GM12878 (cell line): ENCODE measurements at regions of chr4 and their contacts with region 1.

Region 1: DNA sequence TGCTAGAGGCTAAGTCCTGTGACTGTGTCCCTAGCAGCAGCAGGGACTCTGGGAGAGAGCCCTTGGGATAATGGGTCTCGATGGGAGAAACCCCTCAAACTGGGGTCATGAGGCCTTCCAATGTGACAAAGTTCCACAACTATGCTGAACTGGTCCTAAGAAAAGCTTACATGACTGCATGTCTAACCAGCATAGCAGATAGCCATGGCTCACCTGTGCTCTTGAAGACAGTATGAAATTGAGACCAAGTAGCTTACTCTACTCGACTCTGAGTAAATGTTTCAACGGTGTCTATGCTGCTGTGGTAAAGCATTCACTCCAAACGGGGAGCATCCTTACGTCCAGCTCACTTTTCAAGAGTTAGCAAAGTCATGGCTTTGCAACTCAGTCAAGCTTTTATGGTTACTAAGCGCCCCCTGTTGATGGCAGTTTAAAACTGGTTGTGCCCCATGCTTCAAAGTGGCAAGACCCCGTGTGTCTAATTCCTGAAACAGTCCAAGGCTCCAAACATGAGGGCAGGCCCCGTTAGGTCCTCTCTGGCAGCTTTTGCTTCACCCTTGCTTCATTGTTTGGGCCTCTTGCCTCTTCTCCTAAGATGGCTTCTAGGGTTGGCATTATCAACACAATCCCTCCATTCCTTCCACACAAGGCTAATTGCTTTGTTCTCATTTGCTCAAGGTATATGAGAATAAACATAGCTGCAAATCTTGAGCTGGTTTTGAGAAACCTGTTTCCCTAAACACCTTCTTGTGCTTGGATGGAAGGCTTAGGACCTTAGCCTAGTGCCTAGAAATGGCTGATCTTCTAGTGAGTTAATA is 46.6 kb downstream of the CCNG2 start:
- DNase-seq: peak; percentile 23
- ATAC-seq: peak; percentile 95
- H3K4me3 ChIP-seq: no peak overlapping the region
- H3K27ac ChIP-seq: no peak overlapping the region
- H3K4me1 ChIP-seq: no peaks in the 10 kb centered on the region
- H3K27me3 ChIP-seq: peaks cover 0 to 3% of the 10 kb centered on the region in 2 experiments; a peak in 1 of 4 replicates
- CTCF ChIP-seq: peak; percentile 68 to 93 (median 84)
- EP300 ChIP-seq: no peak
- POLR2A ChIP-seq: no peak
- RAD21 ChIP-seq: peak; percentile 95

Region 2: GRCh38 chr4:76515975-76516843 is 687.4 kb before region 1 on chr4:
- CTCF ChIA-PET with region 1: no interaction called
- POLR2A ChIA-PET with region 1: no interaction called
- RAD21 ChIA-PET with region 1: no interaction called
- SMC1A ChIA-PET with region 1: interaction called, 4 read pairs
- in situ Hi-C with region 1: loop called (anchors 10 kb)
- intact Hi-C with region 1: loop called (anchors 5 kb)
- DNase-seq: peak; percentile 41
- ATAC-seq: peak; percentile 84
- H3K4me3 ChIP-seq: no peak overlapping the region
- H3K27ac ChIP-seq: no peak overlapping the region
- H3K4me1 ChIP-seq: peaks cover 7% of the 10 kb centered on the region; the same call in 1 of the 2 replicates
- H3K27me3 ChIP-seq: no peaks in the 10 kb centered on the region; a peak in 1 of 4 replicates
- CTCF ChIP-seq: no peak
- EP300 ChIP-seq: peak in 1 of 2 experiments; percentile 53; a peak in 1 of 4 replicates
- POLR2A ChIP-seq: no peak
- RAD21 ChIP-seq: no peak

Region 3: GRCh38 chr4:76601791-76602190 is 601.8 kb before region 1 on chr4:
- CTCF ChIA-PET with region 1: no interaction called
- POLR2A ChIA-PET with region 1: no interaction called
- RAD21 ChIA-PET with region 1: no interaction called
- SMC1A ChIA-PET with region 1: no interaction called
- in situ Hi-C with region 1: no loop called
- intact Hi-C with region 1: no loop called
- DNase-seq: no peak
- ATAC-seq: no peak
- H3K4me3 ChIP-seq: no peak overlapping the region
- H3K27ac ChIP-seq: no peak overlapping the region
- H3K4me1 ChIP-seq: peaks cover 6% of the 10 kb centered on the region; the same call in 1 of the 2 replicates
- H3K27me3 ChIP-seq: no peaks in the 10 kb centered on the region; a peak in 1 of 4 replicates
- CTCF ChIP-seq: no peak
- EP300 ChIP-seq: no peak
- POLR2A ChIP-seq: no peak
- RAD21 ChIP-seq: no peak

Region 4: GRCh38 chr4:77065382-77065781 is 138.2 kb before region 1 on chr4:
- CTCF ChIA-PET with region 1: interaction called, 30 read pairs
- POLR2A ChIA-PET with region 1: interaction called, 8 read pairs
- RAD21 ChIA-PET with region 1: interaction called, 5 read pairs
- SMC1A ChIA-PET with region 1: interaction called, 44 read pairs
- in situ Hi-C with region 1: no loop called
- intact Hi-C with region 1: no loop called
- DNase-seq: no peak
- ATAC-seq: no peak
- H3K4me3 ChIP-seq: no peak overlapping the region
- H3K27ac ChIP-seq: no peak overlapping the region
- H3K4me1 ChIP-seq: no peaks in the 10 kb centered on the region; the same call in 1 of the 2 replicates
- H3K27me3 ChIP-seq: no peaks in the 10 kb centered on the region
- CTCF ChIP-seq: no peak
- EP300 ChIP-seq: no peak
- POLR2A ChIP-seq: no peak
- RAD21 ChIP-seq: no peak

Region 5: DNA sequence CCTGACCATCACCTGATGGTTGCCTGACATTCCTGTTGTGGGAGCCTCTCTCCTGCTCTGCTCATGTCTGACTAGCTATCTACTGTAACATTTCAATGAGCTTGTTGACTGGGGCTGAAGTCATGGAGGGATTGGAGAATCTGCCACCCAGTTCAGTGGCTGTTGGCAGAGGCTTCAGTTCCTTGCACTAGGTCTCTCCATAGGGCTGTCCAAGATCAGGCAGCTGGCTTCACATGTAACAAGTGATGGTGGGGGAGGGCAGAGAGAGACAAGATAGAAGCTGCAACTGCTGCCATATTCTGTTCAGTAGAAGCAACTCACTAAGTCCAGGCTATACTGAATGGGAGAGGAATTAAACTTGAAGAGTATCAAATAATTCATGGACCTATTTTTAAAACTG is 113.7 kb before region 1 on chr4:
- CTCF ChIA-PET with region 1: interaction called, 535 read pairs
- POLR2A ChIA-PET with region 1: interaction called, 3 read pairs
- RAD21 ChIA-PET with region 1: interaction called, 229 read pairs
- SMC1A ChIA-PET with region 1: interaction called, 286 read pairs
- in situ Hi-C with region 1: loop called (anchors 5 kb)
- intact Hi-C with region 1: loop called (anchors 1 kb)
- DNase-seq: no peak
- ATAC-seq: no peak
- H3K4me3 ChIP-seq: no peak overlapping the region
- H3K27ac ChIP-seq: no peak overlapping the region
- H3K4me1 ChIP-seq: no peaks in the 10 kb centered on the region
- H3K27me3 ChIP-seq: no peaks in the 10 kb centered on the region
- CTCF ChIP-seq: no peak
- EP300 ChIP-seq: no peak
- POLR2A ChIP-seq: no peak
- RAD21 ChIP-seq: no peak

Region 6: DNA sequence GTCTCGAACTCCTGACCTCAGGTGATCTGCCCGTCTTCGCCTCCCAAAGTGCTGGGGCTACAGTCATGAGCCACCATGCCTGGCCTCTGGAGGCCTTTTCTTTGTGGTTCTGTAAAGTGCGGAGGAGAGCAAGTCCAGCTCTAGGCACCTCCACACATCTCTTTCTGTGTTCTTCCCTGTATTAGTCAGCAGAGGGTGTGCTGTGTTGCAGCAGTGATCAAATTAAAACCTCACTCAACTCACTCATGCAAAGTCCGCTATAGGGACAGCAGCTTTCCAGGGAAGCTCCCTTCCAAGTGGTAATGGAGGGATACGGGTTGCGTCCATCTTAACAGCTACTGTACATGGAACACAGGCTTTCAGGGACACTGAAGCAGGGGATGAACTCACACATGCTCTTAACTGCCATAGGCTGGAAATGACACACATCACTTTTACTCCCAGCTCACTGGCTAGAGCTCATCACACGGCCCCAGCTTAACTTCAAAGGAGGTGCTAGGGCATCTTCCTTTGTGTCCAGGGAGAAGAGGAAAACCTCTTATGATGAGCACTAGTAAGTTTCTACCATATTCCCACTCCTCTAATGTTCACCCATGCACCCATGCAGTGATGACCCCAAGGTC is 82.6 kb before region 1 on chr4:
- CTCF ChIA-PET with region 1: interaction called, 60 read pairs
- POLR2A ChIA-PET with region 1: no interaction called
- RAD21 ChIA-PET with region 1: interaction called, 46 read pairs
- SMC1A ChIA-PET with region 1: interaction called, 72 read pairs
- in situ Hi-C with region 1: no loop called
- intact Hi-C with region 1: no loop called
- DNase-seq: no peak
- ATAC-seq: peak; percentile 79
- H3K4me3 ChIP-seq: no peak overlapping the region
- H3K27ac ChIP-seq: no peak overlapping the region
- H3K4me1 ChIP-seq: no peaks in the 10 kb centered on the region
- H3K27me3 ChIP-seq: no peaks in the 10 kb centered on the region
- CTCF ChIP-seq: peak; percentile 17 to 38 (median 22); a peak in 4 of 6 replicates
- EP300 ChIP-seq: no peak
- POLR2A ChIP-seq: no peak
- RAD21 ChIP-seq: peak; percentile 52; the same call in 1 of the 2 replicates

Region 7: GRCh38 chr4:77177199-77177598 is 26.4 kb before region 1 on chr4:
- CTCF ChIA-PET with region 1: interaction called, 18 read pairs
- POLR2A ChIA-PET with region 1: interaction called, 5 read pairs
- RAD21 ChIA-PET with region 1: interaction called, 8 read pairs
- SMC1A ChIA-PET with region 1: interaction called, 5 read pairs
- in situ Hi-C with region 1: no loop called
- intact Hi-C with region 1: no loop called
- DNase-seq: no peak
- ATAC-seq: no peak
- H3K4me3 ChIP-seq: no peak overlapping the region
- H3K27ac ChIP-seq: no peak overlapping the region
- H3K4me1 ChIP-seq: no peaks in the 10 kb centered on the region
- H3K27me3 ChIP-seq: no peaks in the 10 kb centered on the region; a peak in 1 of 4 replicates
- CTCF ChIP-seq: no peak
- EP300 ChIP-seq: no peak
- POLR2A ChIP-seq: no peak
- RAD21 ChIP-seq: no peak

Region 8: DNA sequence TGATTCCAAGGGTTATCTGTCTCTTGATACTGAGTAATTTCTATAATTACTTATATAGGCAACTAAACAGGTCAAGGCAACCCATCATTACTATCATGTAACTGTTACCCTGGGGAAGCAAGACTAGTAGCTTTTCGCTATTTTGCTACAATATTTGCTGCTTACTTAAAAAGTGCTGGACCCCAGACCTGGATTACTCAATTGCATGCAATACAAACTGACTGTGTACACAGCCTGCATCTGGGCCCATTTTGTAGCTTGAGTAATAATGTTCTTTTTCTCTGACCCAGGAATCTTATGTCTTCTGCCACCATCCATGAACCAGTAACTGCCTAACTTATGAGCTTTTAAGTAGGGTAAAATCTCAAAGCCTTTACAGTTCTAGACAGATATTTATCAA is 562.1 kb after region 1 on chr4:
- CTCF ChIA-PET with region 1: no interaction called
- POLR2A ChIA-PET with region 1: no interaction called
- RAD21 ChIA-PET with region 1: no interaction called
- SMC1A ChIA-PET with region 1: no interaction called
- in situ Hi-C with region 1: no loop called
- intact Hi-C with region 1: no loop called
- DNase-seq: no peak
- ATAC-seq: no peak
- H3K4me3 ChIP-seq: no peak overlapping the region
- H3K27ac ChIP-seq: no peak overlapping the region
- H3K4me1 ChIP-seq: no peaks in the 10 kb centered on the region
- H3K27me3 ChIP-seq: no peaks in the 10 kb centered on the region
- CTCF ChIP-seq: no peak
- EP300 ChIP-seq: no peak
- POLR2A ChIP-seq: no peak
- RAD21 ChIP-seq: no peak